AG04449 (cell line): ENCODE measurements at regions of chr14 and their contacts with region 1.

Region 1: DNA sequence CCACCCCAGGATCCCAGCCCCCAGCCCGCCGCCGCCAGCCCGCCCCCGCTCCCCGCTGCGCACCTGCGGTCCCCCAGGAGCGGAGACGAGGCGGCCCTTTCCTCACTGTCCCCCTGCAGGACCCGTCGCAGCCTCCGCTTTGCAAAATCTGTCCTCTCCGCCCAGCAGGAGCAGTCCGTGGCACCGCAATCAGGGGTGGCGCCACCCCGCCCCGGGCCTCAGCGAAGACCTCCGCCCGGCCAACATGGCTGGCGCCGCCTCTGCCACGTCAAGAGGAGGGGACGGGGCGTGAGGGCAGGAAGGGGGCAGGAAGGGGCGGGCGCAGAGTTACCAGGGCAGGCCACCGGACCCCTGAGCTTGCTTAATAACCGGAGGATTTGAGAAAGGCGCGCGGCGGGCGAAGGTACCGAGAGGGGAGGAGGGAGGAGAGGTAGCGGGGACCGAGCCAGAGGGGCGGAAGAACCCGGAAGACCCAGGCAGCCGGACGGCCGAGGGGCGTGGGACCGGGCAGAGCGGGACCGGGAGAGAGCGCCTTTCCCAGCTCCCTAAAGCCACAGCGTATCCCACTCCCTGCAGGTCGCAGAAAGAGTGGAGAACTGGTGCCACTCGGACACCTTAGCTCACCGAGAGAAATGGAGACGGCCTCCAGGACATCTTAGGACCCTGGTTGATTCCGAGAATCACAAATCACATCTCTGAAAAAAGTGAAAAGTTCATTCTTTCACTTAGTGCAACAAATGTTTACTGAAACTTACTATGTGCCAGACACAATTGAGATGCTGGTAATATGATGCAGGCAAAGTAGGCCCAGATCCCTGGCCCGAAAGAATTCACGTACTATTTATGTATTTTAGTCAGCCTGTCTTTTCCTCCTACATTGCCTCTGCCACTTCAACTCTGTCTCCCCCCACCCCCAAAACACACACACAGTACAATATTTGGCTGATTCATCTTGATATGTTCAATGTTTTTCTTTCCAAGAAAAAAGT is at the start of gene SEC23A:
- DNase-seq: peak; percentile 40
- H3K4me3 ChIP-seq: peak within 1 kb of the TSS; percentile 75
- CTCF ChIP-seq: peak; percentile 9

Region 2: GRCh38 chr14:39114073-39114838 is 11.0 kb after region 1 on chr14 and contains the start of gene GEMIN2:
- CTCF ChIA-PET with region 1: interaction called, 20 read pairs
- POLR2A ChIA-PET with region 1: interaction called, 14 read pairs
- DNase-seq: peak; percentile 54
- H3K4me3 ChIP-seq: peak within 1 kb of the TSS; percentile 86
- CTCF ChIP-seq: no peak

Region 3: GRCh38 chr14:39169541-39169900 is 66.3 kb after region 1 on chr14:
- CTCF ChIA-PET with region 1: interaction called, 5 read pairs
- POLR2A ChIA-PET with region 1: interaction called, 15 read pairs
- DNase-seq: no peak
- H3K4me3 ChIP-seq: peak overlapping the region; percentile 99
- CTCF ChIP-seq: no peak

Region 4: GRCh38 chr14:39258782-39259545 is 155.7 kb after region 1 on chr14:
- CTCF ChIA-PET with region 1: no interaction called
- POLR2A ChIA-PET with region 1: no interaction called
- DNase-seq: no peak
- H3K4me3 ChIP-seq: no peak overlapping the region
- CTCF ChIP-seq: no peak

Region 5: DNA sequence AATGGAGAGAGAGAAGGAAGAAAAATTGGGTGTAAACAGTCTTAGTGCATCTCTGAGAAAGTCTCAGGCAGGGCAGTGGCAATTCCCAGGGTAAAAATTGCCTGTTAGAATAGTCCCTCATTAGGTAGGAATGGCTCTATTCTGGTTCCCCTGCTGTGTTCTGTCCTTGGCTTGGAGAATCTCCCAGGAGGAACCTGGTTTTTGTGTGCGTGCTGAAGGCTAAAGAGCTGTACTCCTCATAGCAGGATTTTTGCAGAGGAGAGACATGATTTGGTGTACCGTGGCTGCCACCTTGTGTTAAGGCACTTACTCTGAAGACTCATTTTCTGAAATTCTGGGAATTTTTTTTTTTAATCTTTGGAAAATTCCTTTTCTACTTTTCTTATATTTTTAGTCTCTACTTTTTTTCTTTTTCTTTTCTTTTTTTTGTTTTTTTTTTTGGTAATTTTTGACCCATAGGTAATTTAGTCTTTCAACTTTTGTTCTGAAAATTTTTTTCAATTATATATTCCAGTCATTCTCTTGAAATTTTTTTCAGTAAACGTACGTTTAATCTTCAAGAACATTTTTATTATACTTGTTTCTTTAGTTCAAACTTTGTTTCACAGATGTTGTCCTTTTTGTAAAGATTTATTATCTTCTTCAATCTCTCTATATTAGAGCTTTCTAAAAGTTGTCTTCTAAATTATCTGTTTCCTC is 265.1 kb after region 1 on chr14:
- CTCF ChIA-PET with region 1: interaction called, 60 read pairs
- POLR2A ChIA-PET with region 1: interaction called, 3 read pairs
- DNase-seq: peak; percentile 40
- H3K4me3 ChIP-seq: no peak overlapping the region
- CTCF ChIP-seq: peak; percentile 47

Region 6: DNA sequence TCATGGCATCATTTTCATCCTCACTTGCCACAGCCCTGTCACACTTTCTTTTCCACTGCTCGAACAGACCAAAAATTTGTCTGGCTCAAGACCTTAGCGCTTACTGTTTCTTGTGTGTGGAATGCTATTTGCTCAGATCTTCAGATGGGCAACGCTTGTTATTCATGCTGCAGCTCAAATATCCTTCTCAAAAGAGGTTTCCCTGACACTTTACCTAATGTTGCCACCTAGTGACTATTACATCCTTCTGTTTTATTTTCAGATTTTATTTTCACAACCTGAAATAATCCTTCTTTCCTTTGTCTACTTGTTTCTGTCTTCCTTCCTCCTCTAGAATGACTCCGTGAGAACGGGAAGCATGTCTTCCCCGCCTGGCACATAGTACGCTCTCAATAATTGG is 323.3 kb after region 1 on chr14:
- CTCF ChIA-PET with region 1: interaction called, 76 read pairs
- POLR2A ChIA-PET with region 1: interaction called, 8 read pairs
- DNase-seq: no peak
- H3K4me3 ChIP-seq: no peak overlapping the region
- CTCF ChIP-seq: no peak